ENCODE measurements at regions of chr6 and their contacts with region 1.

Region 1: GRCh38 chr6:136792410-136793262 is at the start of gene MAP3K5:
- DNase-seq: peak; percentile 80
- CTCF ChIP-seq: peak; percentile 93

Region 2: GRCh38 chr6:136607932-136608772 is 184.5 kb before region 1 on chr6:
- CTCF ChIA-PET with region 1: interaction called, 20 read pairs
- POLR2A ChIA-PET with region 1: no interaction called
- DNase-seq: peak; percentile 65
- CTCF ChIP-seq: peak; percentile 73

Region 3: GRCh38 chr6:136693090-136693489 is 99.5 kb before region 1 on chr6:
- CTCF ChIA-PET with region 1: interaction called, 20 read pairs
- POLR2A ChIA-PET with region 1: no interaction called
- DNase-seq: no peak
- CTCF ChIP-seq: no peak

Region 4: GRCh38 chr6:136728976-136729515 is 63.6 kb before region 1 on chr6:
- CTCF ChIA-PET with region 1: interaction called, 14 read pairs
- POLR2A ChIA-PET with region 1: no interaction called
- DNase-seq: no peak
- CTCF ChIP-seq: no peak

Region 5: DNA sequence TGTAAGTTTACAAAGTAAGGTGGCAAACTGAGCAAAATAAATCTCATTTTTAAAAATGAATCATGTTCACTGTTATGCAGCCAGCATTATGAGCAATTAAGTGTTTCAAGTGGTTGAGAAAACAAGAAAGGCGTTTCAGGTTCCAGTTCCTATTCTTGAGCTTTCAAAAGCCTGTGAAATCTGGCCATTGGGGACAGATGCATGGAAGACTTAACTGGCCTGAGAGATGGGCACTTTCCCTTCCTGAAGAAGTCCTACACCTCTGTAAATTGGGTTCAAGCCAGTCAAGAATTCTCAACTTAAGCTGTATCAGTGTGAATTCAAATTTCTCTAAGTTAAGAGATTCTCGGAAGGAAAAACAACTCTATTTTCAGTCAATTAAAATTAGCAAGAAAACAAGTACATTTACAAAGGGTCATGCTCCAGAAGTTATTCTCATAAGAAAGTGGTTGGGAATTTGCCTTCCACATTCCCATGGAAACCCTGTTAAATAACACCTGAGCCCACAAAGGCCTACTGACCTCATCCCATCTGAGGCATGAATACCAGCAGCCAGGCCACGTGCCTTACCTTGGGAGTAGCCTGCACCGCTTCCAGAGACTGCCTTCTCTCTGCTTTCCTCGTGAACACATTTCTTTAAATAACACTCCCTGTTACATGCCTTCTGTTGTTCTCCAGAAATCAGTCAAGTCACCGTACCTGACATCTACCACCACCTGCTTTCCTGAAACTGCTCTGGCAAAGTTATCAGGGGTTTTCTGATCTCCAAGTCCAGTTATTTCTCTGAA is 19.8 kb before region 1 on chr6:
- CTCF ChIA-PET with region 1: interaction called, 40 read pairs
- POLR2A ChIA-PET with region 1: interaction called, 4 read pairs
- DNase-seq: peak; percentile 45
- CTCF ChIP-seq: no peak

Region 6: GRCh38 chr6:136863756-136864155 is 71.1 kb after region 1 on chr6:
- CTCF ChIA-PET with region 1: no interaction called
- POLR2A ChIA-PET with region 1: no interaction called
- DNase-seq: no peak
- CTCF ChIP-seq: no peak